Right lobe of liver (tissue), 6 donors: ENCODE measurements at regions of chr15 and their contacts with region 1.

Region 1: DNA sequence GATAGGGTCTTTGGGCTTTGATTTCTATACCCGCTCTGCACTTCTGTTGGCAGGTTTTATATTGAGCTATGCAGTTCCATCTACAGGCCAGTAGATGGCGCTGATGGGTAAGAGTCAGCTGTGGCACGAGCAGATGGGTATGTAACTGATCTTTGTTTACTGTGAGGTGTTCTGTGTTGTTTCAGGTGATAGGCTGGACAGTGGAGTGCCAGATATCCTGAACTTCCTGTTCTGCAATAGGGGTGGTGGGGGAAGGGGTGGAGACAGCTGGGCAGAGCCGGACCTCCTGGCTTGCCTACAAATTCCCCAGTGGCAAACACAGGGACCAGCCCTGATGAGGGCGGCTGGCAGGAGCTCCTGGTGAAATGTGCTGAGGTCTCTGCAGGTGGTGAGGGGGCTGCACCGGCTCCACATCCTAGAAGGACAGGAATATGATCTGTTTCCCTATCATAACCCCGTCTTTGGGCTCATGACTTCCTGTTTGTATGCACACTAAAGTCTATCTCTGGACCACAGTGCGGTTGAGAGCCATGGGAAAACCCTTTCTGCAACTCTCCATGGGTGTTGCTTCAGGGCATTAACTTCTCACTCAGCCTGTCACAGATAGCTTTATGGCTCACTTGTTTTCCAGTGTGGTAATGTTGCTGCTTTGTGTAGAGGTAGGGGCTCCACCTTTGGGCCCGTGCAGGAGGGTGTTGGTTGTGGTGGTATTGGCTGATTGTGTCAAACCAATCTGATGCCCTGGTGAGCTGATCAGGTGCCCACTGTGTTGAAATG is 13.4 kb upstream of the FAM98B start:
- DNase-seq: peak in 2 of 3 donors; percentile 36 to 55
- ATAC-seq: peak; percentile 97 to 99 (median 98)
- H3K4me3 ChIP-seq: no peak overlapping the region
- H3K27ac ChIP-seq: no peak overlapping the region
- H3K4me1 ChIP-seq: peaks cover 0 to 3% (median 0%) of the 10 kb centered on the region in 4 donors
- H3K27me3 ChIP-seq: no peaks in the 10 kb centered on the region
- CTCF ChIP-seq: peak; percentile 92 to 94 (median 92)
- POLR2A ChIP-seq: no peak

Region 2: GRCh38 chr15:38671675-38672254 is 231.2 kb after region 1 on chr15:
- intact Hi-C with region 1: loop called in 1 of 2 experiments (anchors 10 kb)
- DNase-seq: no peak
- ATAC-seq: peak; percentile 25 to 52 (median 40)
- H3K4me3 ChIP-seq: no peak overlapping the region
- H3K27ac ChIP-seq: no peak overlapping the region
- H3K4me1 ChIP-seq: no peaks in the 10 kb centered on the region
- H3K27me3 ChIP-seq: no peaks in the 10 kb centered on the region
- CTCF ChIP-seq: no peak
- POLR2A ChIP-seq: no peak